PC-9 (cell line): ENCODE measurements at regions of chr5 and their contacts with region 1.

Region 1: GRCh38 chr5:88660947-88661805 is 221.8 kb downstream of the MEF2C start:
- DNase-seq: peak; percentile 84 to 97
- H3K4me3 ChIP-seq: peak overlapping the region; percentile 58
- H3K27ac ChIP-seq: peak overlapping the region; percentile 54
- H3K4me1 ChIP-seq: peaks cover 9% of the 10 kb centered on the region
- H3K27me3 ChIP-seq: no peaks in the 10 kb centered on the region
- CTCF ChIP-seq: no peak

Region 2: GRCh38 chr5:88244657-88245056 is 416.5 kb before region 1 on chr5:
- CTCF ChIA-PET with region 1: no interaction called
- POLR2A ChIA-PET with region 1: interaction called, 12 read pairs
- intact Hi-C with region 1: no loop called
- DNase-seq: peak; percentile 24 to 91
- H3K4me3 ChIP-seq: peak overlapping the region; percentile 44; the same call in 1 of the 2 replicates
- H3K27ac ChIP-seq: peak overlapping the region; percentile 90
- H3K4me1 ChIP-seq: peaks cover 45% of the 10 kb centered on the region
- H3K27me3 ChIP-seq: no peaks in the 10 kb centered on the region
- CTCF ChIP-seq: no peak

Region 3: GRCh38 chr5:88268385-88269184 is 392.6 kb before region 1 on chr5 and contains the start of gene TMEM161B:
- CTCF ChIA-PET with region 1: no interaction called
- POLR2A ChIA-PET with region 1: no interaction called
- intact Hi-C with region 1: loop called (anchors 2 kb)
- DNase-seq: peak; percentile 87 to 93
- H3K4me3 ChIP-seq: peak within 1 kb of the TSS; percentile 93
- H3K27ac ChIP-seq: peak within 1 kb of the TSS; percentile 58
- H3K4me1 ChIP-seq: peaks cover 33% of the 10 kb centered on the region
- H3K27me3 ChIP-seq: no peaks in the 10 kb centered on the region
- CTCF ChIP-seq: no peak
- total RNA-seq, gene TMEM161B: 17.3 and 24.8 TPM in 2 replicates

Region 4: GRCh38 chr5:88438011-88438410 is 223.2 kb before region 1 on chr5:
- CTCF ChIA-PET with region 1: no interaction called
- POLR2A ChIA-PET with region 1: no interaction called
- intact Hi-C with region 1: loop called (anchors 2 kb)
- DNase-seq: peak; percentile 72 to 91
- H3K4me3 ChIP-seq: no peak overlapping the region
- H3K27ac ChIP-seq: peak overlapping the region; percentile 63
- H3K4me1 ChIP-seq: peaks cover 29% of the 10 kb centered on the region
- H3K27me3 ChIP-seq: no peaks in the 10 kb centered on the region
- CTCF ChIP-seq: no peak

Region 5: GRCh38 chr5:88674356-88675167 is 13.4 kb after region 1 on chr5:
- CTCF ChIA-PET with region 1: interaction called, 3 read pairs
- POLR2A ChIA-PET with region 1: interaction called, 29 read pairs
- intact Hi-C with region 1: loop called (anchors 1 kb)
- DNase-seq: peak in 1 of 2 experiments; percentile 72
- H3K4me3 ChIP-seq: peak overlapping the region; percentile 77
- H3K27ac ChIP-seq: peak overlapping the region; percentile 79
- H3K4me1 ChIP-seq: peaks cover 10% of the 10 kb centered on the region
- H3K27me3 ChIP-seq: no peaks in the 10 kb centered on the region
- CTCF ChIP-seq: no peak